Adrenal gland (tissue), 19 donors: ENCODE measurements at regions of chr9 and their contacts with region 1.

Region 1: GRCh38 chr9:78620764-78621163 is 323.8 kb downstream of the PSAT1 start:
- DNase-seq: no peak
- H3K4me3 ChIP-seq: no peak overlapping the region
- H3K27ac ChIP-seq: no peak overlapping the region
- H3K4me1 ChIP-seq: no peaks in the 10 kb centered on the region
- H3K27me3 ChIP-seq: no peaks in the 10 kb centered on the region
- CTCF ChIP-seq: no peak
- POLR2A ChIP-seq: no peak

Region 2: GRCh38 chr9:78552802-78553201 is 68.0 kb before region 1 on chr9:
- intact Hi-C with region 1: no loop called
- DNase-seq: no peak
- H3K4me3 ChIP-seq: no peak overlapping the region
- H3K27ac ChIP-seq: no peak overlapping the region
- H3K4me1 ChIP-seq: no peaks in the 10 kb centered on the region
- H3K27me3 ChIP-seq: no peaks in the 10 kb centered on the region
- CTCF ChIP-seq: no peak
- POLR2A ChIP-seq: no peak

Region 3: GRCh38 chr9:78746010-78746409 is 125.2 kb after region 1 on chr9:
- intact Hi-C with region 1: loop called in 1 of 2 experiments (anchors 5 kb)
- DNase-seq: no peak
- H3K4me3 ChIP-seq: no peak overlapping the region
- H3K27ac ChIP-seq: no peak overlapping the region
- H3K4me1 ChIP-seq: no peaks in the 10 kb centered on the region
- H3K27me3 ChIP-seq: no peaks in the 10 kb centered on the region
- CTCF ChIP-seq: no peak
- POLR2A ChIP-seq: no peak